ENCODE measurements at regions of chr13 and their contacts with region 1.

Region 1: GRCh38 chr13:114099918-114100445 is 32.4 kb downstream of the RASA3 start:
- DNase-seq: no peak

Region 2: GRCh38 chr13:113951246-113951999 is 148.6 kb before region 1 on chr13:
- in situ Hi-C with region 1: loop called (anchors 10 kb)
- DNase-seq: peak; percentile 82

Measured in KBM-7 (cell line).